ENCODE measurements at regions of chr3 and their contacts with region 1.

Region 1: GRCh38 chr3:965826-966225 is 127.0 kb upstream of the CNTN6 start:
- DNase-seq: no peak
- CTCF ChIP-seq: no peak

Region 2: GRCh38 chr3:732326-732928 is 233.4 kb before region 1 on chr3:
- CTCF ChIA-PET with region 1: no interaction called
- POLR2A ChIA-PET with region 1: no interaction called
- DNase-seq: no peak
- CTCF ChIP-seq: no peak

Region 3: GRCh38 chr3:976021-976420 is 10.2 kb after region 1 on chr3:
- CTCF ChIA-PET with region 1: interaction called, 13 read pairs
- POLR2A ChIA-PET with region 1: no interaction called
- DNase-seq: no peak
- CTCF ChIP-seq: no peak